PC-9 (cell line): ENCODE measurements at regions of chr17 and their contacts with region 1.

Region 1: GRCh38 chr17:38674749-38675615 is at the start of gene EPOP:
- DNase-seq: peak; percentile 62 to 89
- H3K4me3 ChIP-seq: peak within 1 kb of the TSS; percentile 95
- H3K27ac ChIP-seq: no peak within 1 kb of the TSS
- H3K4me1 ChIP-seq: peaks cover 23% of the 10 kb centered on the region
- H3K27me3 ChIP-seq: no peaks in the 10 kb centered on the region
- CTCF ChIP-seq: no peak; the same call in 1 of the 2 replicates
- total RNA-seq, gene EPOP: 8.4 and 10.6 TPM in 2 replicates

Region 2: GRCh38 chr17:38702166-38702899 is 27.4 kb after region 1 on chr17:
- CTCF ChIA-PET with region 1: no interaction called
- POLR2A ChIA-PET with region 1: interaction called, 4 read pairs
- intact Hi-C with region 1: loop called (anchors 2 kb)
- DNase-seq: peak; percentile 78 to 82
- H3K4me3 ChIP-seq: peak overlapping the region; percentile 99
- H3K27ac ChIP-seq: peak overlapping the region; percentile 82
- H3K4me1 ChIP-seq: peaks cover 23% of the 10 kb centered on the region
- H3K27me3 ChIP-seq: no peaks in the 10 kb centered on the region
- CTCF ChIP-seq: no peak

Region 3: DNA sequence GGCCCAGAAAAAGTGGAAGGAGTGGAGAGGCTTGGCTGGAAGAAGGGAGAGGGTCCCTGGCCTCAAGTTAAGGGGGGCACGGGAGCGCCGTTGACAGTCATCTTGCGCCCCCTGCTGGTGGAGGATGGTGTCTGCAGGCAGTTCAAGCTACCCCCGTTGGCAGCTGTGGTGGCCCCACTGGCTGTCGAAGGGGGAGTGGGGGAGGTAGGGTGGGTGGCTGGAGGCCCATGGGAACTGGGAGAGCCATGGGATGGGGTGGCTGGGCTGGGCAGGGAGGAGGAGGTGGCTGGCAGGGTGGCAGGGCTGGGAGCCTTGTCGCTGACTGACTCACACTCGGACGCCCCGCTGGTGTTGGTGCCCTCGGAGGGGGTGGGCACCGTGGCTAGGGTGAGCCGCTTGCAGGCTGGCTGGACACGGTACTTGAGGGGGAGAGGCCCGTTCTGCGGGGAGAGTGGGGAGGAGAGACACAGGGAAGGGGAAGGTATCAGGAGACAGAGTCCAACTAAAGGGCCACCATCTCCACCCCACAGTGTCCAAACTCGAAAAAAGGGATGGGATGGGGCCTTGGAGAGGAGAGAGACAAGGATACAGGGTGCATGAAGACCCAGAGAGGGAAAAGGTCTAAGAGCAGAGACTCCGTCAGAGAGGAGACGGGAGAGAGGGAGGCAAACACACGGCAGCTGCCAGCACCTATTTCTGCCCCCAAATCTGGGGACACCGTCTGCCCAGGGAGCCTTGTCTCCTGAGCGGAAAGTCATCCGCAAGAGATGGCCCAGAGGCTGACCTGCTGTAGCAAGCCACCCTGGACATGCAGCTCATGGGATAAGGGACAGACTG is 60.4 kb after region 1 on chr17:
- CTCF ChIA-PET with region 1: interaction called, 10 read pairs
- POLR2A ChIA-PET with region 1: no interaction called
- intact Hi-C with region 1: loop called (anchors 1 kb)
- DNase-seq: no peak
- H3K4me3 ChIP-seq: no peak overlapping the region
- H3K27ac ChIP-seq: no peak overlapping the region
- H3K4me1 ChIP-seq: peaks cover 11% of the 10 kb centered on the region
- H3K27me3 ChIP-seq: no peaks in the 10 kb centered on the region
- CTCF ChIP-seq: peak; percentile 98